ENCODE measurements at regions of chr4 and their contacts with region 1.

Region 1: GRCh38 chr4:9762823-9763475 is 18.5 kb upstream of the DRD5 start:
- DNase-seq: peak; percentile 69

Region 2: DNA sequence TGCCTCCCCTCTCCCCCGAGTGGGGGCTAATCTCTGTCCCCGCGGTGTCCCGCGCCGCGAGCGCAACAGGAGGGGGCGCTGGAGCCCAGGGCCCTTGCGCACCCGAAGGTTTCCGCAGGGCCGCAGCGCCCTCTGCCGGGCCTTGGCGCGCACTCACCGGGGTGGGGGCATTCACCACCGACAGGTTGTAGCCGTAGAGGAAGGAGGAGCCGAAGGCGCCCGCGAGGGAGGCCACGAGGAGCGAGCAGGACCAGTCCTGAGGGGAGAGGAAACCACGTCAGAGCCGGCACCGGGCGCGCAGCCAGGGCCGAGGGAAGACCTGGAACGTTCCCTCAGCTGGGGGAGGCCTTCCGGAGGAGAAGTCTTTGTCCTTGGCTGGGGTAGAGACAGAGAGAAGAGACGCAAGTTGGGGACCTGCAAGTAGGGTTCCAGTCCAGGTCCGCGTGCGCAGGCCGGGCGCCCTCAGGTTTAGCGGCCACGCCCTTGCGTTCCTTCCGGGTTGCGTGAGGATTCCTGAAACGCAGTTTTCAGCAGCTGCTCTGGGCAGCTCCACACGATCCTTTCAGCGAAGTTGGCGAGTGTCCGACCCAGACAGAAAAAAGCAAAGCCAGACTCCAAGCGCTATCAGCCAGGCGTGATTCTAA is 256.0 kb after region 1 on chr4:
- in situ Hi-C with region 1: loop called (anchors 10 kb)
- DNase-seq: peak; percentile 97

Measured in KBM-7 (cell line).